Activated T-helper 2 cell treated with anti-CD3 and anti-CD28 coated beads, Interferon-gamma antibody, Interleukin-2, Interleukin-4, amounts not matched to agents 10 μg/mL and 5 μg/mL and 100 μg/mL, durations not matched to agents 14 hours and 24 hours and 36 hours (primary cell): ENCODE measurements at regions of chr21 and their contacts with region 1.

Region 1: GRCh38 chr21:42187976-42188653 is 30.8 kb upstream of the ABCG1 start:
- DNase-seq: peak; percentile 83
- H3K4me3 Mint-ChIP-seq: peak overlapping the region; percentile 48
- H3K27ac Mint-ChIP-seq: peak overlapping the region; percentile 90
- H3K4me1 Mint-ChIP-seq: peaks cover 64% of the 10 kb centered on the region
- H3K27me3 Mint-ChIP-seq: no peaks in the 10 kb centered on the region

Region 2: DNA sequence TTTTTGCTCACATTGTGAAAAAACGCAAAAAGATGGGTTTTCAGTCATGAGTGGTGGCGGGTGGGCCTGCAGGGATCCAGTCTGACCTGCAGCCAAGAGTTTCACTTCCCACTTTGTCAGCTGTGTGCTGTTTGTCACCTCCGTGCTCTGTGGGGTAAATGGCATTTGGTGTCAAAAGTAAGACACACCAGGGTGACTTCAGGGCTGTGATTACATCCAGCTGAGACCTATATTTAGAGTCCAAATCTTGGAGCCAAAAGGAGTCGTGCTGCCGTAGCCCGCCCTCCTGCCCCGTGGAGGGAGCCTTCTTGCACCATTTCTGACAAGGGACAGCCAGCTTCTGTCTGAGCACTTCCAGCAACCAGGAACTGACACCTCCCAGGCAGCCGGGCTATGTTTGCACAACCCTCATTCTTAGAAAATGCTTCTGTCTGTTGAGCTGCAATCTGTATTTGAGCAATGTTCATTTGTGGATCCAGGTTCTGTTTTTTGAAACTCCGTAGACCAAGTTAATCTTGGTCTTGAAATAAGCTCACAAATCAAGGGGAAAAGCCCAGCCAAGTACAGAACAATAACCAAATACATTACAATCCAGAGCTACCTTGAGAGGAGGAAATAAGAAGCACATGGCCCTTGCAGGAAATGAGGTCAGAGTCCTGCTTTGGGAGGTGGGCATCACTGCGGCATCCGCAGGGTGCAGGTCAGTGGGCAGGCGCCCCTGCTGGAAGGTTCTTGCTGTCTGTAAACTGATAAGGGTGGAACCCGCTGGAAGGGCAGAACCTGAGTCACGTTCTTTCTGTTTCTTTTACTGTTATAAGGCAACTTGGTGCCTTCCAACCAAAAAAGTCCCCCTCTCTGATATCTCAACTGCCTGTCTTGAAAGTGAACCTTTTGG is 45.2 kb after region 1 on chr21:
- intact Hi-C with region 1: loop called (anchors 1 kb)
- DNase-seq: peak; percentile 77
- H3K4me3 Mint-ChIP-seq: peak overlapping the region; percentile 63
- H3K27ac Mint-ChIP-seq: peak overlapping the region; percentile 93
- H3K4me1 Mint-ChIP-seq: peaks cover 85% of the 10 kb centered on the region
- H3K27me3 Mint-ChIP-seq: no peaks in the 10 kb centered on the region